Sciatic nerve (tissue), 2 donors: ENCODE measurements at regions of chr15 and their contacts with region 1.

Region 1: GRCh38 chr15:65334586-65335231 is 30.2 kb downstream of the RNU5B-1 start:
- DNase-seq: no peak
- ATAC-seq: no peak

Region 2: DNA sequence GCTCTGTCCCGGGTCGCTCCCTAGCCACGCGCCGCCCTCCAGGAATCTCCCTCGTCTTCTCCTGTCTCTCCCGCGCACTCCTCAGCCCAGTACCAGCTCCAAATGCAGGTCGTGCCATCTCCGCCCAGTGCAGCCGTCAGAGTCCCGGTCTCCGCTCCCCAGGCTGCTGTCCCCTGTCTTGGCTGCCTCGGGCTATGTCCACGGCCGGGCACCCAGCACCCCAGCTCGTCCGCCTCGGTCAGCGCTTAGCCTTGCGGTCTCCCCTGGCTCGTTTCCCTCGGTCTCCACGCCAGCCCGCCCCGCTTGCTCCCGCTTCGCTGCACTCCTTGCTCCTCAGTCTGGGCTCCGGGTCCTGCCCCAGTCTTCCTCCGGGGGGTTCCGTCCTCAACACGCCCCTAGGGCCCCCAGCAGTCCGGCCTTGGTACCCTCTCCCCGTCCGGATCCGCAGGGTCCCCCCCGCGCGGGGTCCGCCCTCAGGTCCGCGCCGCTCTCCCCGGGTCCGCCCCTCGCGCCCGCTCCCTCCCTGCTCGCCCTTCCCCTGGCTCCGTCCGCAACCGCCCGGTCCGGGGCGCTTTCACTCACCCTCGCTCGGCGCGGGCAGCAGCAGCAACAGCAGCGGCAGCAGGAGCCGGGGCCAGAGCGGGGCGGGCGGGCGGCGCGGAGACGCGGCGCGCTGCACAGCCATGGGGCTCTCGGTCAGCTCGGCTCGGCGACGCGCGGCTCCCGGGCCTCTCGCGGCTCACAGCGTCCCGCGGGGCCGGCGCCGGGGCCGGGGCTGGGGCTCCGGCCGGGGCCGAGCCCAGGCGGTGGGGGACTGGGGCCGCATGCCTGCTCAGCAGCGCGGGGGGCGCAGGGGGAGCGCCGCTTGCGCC is 42.6 kb after region 1 on chr15:
- intact Hi-C with region 1: loop called (anchors 5 kb)
- DNase-seq: no peak
- ATAC-seq: peak; percentile 49